Activated B cell treated with CpG ODN at 0.5 μM for 24 hours (primary cell): ENCODE measurements at regions of chr3 and their contacts with region 1.

Region 1: GRCh38 chr3:141192345-141192744 is 39.3 kb upstream of the PXYLP1 start:
- DNase-seq: peak; percentile 85
- ATAC-seq: peak; percentile 100
- H3K4me3 Mint-ChIP-seq: no peak overlapping the region
- H3K27ac Mint-ChIP-seq: no peak overlapping the region
- H3K4me1 Mint-ChIP-seq: peaks cover 6% of the 10 kb centered on the region
- H3K27me3 Mint-ChIP-seq: peaks cover 23% of the 10 kb centered on the region
- CTCF ChIP-seq: no peak

Region 2: GRCh38 chr3:139935016-139935865 is 1257.1 kb before region 1 on chr3 and contains the start of gene CLSTN2:
- CTCF ChIA-PET with region 1: no interaction called
- POLR2A ChIA-PET with region 1: no interaction called
- intact Hi-C with region 1: loop called (anchors 10 kb)
- DNase-seq: no peak
- ATAC-seq: no peak
- H3K4me3 Mint-ChIP-seq: no peak within 1 kb of the TSS
- H3K27ac Mint-ChIP-seq: no peak within 1 kb of the TSS
- H3K4me1 Mint-ChIP-seq: peaks cover 13% of the 10 kb centered on the region
- H3K27me3 Mint-ChIP-seq: peaks cover 42% of the 10 kb centered on the region
- CTCF ChIP-seq: no peak
- total RNA-seq, gene CLSTN2: not detected in 2 replicates

Region 3: DNA sequence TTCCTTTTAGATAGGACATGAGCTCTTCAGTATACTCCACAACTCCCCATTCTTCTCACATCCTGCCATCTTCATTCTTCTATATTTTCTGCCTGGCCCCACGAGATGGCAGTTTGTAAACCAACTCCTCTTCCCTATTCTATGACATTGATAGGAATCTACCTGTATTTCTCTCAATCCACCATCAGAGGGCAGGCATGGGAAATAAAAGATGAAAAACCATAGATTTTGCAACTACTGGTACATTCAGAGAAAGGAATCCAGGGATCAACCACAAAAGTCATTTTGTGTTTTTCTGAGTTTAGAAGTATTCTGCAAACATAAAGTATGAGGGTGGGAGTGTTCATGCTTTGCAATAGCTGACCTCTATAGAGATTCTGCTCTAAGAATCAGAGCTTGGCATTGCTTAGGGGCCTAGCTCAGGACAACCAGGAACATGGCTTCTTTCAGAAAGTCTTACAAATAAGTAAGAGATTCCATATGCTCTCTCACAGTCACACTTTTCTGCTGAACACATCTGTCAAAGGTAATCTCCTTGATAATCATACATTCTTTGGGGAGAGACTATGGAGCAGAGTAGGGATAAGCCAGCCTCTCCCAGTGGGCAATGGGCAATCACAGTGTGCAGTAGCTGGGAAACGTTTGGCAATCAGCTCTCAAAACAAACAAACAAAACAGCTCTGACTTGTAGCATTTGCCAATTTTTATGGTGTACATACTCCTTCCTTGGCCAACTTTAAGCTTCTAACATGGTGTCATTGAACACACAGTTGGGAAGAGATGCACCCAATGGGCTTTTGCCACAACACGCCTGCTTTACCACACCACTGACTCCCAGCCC is 293.8 kb before region 1 on chr3:
- CTCF ChIA-PET with region 1: interaction called, 10 read pairs
- POLR2A ChIA-PET with region 1: no interaction called
- intact Hi-C with region 1: loop called (anchors 1 kb)
- DNase-seq: no peak
- ATAC-seq: peak; percentile 54
- H3K4me3 Mint-ChIP-seq: no peak overlapping the region
- H3K27ac Mint-ChIP-seq: no peak overlapping the region
- H3K4me1 Mint-ChIP-seq: no peaks in the 10 kb centered on the region
- H3K27me3 Mint-ChIP-seq: peaks cover 21% of the 10 kb centered on the region
- CTCF ChIP-seq: peak; percentile 53

Region 4: GRCh38 chr3:141000027-141000663 is 192.2 kb before region 1 on chr3:
- CTCF ChIA-PET with region 1: interaction called, 3 read pairs
- POLR2A ChIA-PET with region 1: no interaction called
- intact Hi-C with region 1: loop called (anchors 1 kb)
- DNase-seq: no peak
- ATAC-seq: no peak
- H3K4me3 Mint-ChIP-seq: no peak overlapping the region
- H3K27ac Mint-ChIP-seq: no peak overlapping the region
- H3K4me1 Mint-ChIP-seq: no peaks in the 10 kb centered on the region
- H3K27me3 Mint-ChIP-seq: peaks cover 8% of the 10 kb centered on the region
- CTCF ChIP-seq: no peak

Region 5: DNA sequence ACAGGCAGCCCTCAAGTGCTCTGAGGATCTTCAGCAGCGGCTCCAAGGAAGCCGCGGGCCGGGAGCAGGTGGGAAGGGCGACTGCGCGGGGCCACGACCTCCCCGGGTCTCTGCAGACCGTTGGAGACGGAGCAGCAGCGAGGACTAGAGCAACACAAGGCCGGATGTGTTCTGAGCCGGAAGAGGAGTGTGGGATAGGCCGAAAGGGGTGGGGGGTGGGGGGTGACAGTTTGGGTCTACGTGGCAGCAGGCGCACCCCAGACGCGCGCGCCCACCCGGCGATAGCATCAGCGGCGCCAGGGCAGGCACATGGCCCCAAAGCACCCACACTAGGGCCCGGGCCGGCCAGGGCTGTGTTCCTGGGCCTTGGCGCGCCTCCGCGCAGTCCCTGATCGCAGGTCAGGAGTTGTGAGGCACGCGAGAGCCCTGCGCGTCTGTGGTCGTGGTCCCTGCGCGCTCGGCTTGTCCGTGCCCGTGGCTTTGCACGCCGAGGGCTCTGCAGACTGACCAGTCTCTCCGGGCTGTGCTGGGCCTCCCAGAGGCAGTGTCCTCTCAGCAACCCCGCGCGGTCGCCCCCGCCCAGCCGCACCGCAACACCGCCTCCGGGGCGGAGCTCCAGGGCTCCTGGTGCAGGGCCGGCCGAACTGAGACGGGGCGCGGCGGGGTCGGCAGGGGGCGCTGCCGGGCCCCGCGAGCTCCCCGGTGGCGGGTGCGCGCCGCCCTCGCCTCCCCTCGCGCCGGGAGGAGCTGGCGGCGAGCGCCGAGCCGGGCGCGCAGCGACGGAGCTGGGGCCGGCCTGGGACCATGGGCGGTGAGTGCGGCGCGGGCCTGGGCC is 39.0 kb after region 1 on chr3 and contains the start of gene PXYLP1:
- CTCF ChIA-PET with region 1: interaction called, 4 read pairs
- POLR2A ChIA-PET with region 1: no interaction called
- intact Hi-C with region 1: loop called (anchors 1 kb)
- DNase-seq: peak; percentile 91
- ATAC-seq: peak; percentile 96
- H3K4me3 Mint-ChIP-seq: peak within 1 kb of the TSS; percentile 93
- H3K27ac Mint-ChIP-seq: peak within 1 kb of the TSS; percentile 94
- H3K4me1 Mint-ChIP-seq: peaks cover 16% of the 10 kb centered on the region
- H3K27me3 Mint-ChIP-seq: no peaks in the 10 kb centered on the region
- CTCF ChIP-seq: no peak
- total RNA-seq, gene PXYLP1: 2.3 and 2.7 TPM in 2 replicates

Region 6: GRCh38 chr3:141725036-141725435 is 532.7 kb after region 1 on chr3:
- CTCF ChIA-PET with region 1: no interaction called
- POLR2A ChIA-PET with region 1: no interaction called
- intact Hi-C with region 1: no loop called
- DNase-seq: no peak
- ATAC-seq: no peak
- H3K4me3 Mint-ChIP-seq: no peak overlapping the region
- H3K27ac Mint-ChIP-seq: no peak overlapping the region
- H3K4me1 Mint-ChIP-seq: no peaks in the 10 kb centered on the region
- H3K27me3 Mint-ChIP-seq: peaks cover 12% of the 10 kb centered on the region
- CTCF ChIP-seq: no peak